Posterior vena cava (tissue), 2 donors: ENCODE measurements at regions of chr1 and their contacts with region 1.

Region 1: DNA sequence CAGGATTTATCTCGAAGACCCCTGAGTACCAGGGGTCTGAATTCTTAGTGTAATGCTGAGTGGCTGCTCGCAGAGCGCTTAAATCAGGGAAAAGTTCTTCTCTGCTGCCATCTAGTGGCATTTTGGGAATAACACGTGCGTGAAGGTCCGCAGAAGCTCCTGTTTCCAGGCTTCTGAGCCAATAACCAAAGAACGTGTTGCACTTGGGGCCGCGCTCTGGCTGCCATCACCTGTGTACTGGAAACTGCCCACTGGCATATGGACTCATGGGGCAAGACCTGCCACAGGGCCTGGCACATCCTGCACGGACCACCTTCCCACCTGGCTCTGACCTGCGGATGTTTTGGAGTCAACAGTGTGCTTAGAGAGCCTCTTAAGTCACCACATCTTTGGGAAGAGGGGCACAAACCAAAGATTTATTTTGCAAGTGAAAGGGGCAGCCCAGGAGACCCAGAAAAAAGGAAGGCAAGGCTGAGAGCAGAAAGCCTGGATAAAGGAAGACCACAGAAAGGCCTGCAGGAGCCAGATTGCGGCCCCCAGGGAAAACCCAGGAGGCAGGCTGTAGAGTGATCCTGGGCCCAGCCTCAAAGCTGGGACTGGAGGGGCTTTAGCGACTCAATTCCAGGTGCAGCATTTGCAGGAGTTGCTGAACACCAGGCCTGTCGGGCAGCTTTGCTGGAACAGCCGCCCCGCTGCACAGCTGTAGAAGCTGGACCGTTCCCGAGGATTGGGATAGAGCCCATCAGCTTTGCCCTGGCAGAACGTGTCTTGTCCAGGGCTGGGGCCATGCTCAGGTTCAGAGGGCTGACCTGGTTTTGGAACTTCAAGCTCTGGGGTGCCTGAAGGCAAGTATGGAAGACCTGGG is 13.0 kb downstream of the CHIT1 start:
- DNase-seq: no peak

Region 2: DNA sequence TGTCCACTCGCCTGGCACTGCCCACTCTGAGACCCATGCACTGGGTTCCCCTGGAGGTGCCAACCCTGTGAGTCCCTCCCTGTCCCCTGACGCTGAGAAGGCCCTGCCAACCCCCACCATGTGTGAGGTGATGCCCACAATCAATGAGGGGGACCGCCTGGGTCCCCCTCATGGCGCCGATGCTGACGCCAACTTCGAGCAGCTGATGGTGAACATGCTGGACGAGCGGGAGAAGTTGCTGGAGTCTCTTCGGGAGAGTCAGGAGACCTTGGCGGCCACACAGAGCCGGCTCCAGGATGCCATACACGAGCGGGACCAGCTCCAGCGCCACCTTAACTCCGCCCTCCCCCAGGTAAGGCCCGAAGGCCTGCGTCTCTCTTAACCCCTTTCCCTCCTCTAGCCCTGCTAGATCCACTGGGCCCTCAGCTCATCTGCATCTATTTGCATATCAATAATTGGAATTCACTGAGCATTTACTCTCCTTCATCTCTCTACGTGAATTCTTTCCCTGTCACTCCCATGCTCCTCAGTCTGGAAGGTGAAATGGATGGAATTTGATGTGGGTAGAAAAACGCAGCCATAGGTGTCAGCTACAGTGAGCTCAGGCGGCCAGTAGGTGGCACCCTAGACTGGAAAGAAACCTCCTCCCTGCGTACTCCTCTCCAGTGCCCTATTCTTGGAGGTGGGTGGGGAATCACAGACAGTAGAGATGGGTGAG is 177.5 kb before region 1 on chr1:
- intact Hi-C with region 1: loop called (anchors 5 kb)
- DNase-seq: peak; percentile 89

Region 3: DNA sequence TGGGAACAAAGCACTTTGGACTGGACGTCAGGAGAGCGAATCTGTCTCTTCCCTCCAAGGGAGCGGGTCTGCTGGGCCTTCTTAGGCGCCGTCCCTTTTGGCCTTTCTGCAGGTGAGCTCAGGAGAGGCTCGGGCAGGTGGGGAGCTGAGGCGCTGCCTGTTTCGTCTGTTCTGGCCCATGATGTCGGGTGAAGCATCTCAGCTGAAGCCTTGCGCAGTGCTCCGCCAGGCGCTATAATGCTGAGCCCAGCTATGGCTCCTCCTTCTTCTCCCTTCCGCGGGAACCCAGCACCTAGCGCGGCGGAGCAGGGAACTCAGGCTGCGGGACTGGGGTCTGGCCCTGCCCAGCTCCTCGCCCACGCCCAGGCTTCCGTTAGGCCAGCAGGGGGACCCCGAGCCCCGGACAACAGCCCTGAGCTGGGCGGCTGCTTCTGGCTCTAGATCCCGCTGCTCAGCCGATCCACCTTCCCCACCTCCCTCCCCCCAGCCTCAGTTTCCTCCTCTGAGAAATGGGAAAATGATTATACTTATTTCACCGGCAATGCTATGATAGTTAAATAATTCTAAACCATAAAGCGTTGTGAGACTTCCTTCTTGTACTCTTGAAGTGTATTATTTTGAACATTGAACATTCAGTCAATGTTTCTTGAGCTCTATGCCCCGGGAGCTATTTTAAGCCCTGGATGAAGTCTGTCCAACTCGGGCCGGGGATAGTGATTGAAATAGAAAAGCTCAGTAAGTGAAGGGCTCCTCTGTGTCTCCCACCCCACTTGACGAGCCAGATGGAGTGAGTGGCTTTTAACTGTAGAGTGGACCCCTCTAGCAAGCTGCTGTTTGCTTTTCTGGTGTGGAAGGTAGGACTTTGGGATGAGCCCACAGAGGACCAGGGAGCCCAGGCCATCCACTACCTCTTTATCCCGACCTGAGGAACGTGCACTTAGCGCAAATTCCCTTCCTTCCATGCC is 98.6 kb before region 1 on chr1:
- intact Hi-C with region 1: loop called (anchors 5 kb)
- DNase-seq: peak; percentile 93

Region 4: DNA sequence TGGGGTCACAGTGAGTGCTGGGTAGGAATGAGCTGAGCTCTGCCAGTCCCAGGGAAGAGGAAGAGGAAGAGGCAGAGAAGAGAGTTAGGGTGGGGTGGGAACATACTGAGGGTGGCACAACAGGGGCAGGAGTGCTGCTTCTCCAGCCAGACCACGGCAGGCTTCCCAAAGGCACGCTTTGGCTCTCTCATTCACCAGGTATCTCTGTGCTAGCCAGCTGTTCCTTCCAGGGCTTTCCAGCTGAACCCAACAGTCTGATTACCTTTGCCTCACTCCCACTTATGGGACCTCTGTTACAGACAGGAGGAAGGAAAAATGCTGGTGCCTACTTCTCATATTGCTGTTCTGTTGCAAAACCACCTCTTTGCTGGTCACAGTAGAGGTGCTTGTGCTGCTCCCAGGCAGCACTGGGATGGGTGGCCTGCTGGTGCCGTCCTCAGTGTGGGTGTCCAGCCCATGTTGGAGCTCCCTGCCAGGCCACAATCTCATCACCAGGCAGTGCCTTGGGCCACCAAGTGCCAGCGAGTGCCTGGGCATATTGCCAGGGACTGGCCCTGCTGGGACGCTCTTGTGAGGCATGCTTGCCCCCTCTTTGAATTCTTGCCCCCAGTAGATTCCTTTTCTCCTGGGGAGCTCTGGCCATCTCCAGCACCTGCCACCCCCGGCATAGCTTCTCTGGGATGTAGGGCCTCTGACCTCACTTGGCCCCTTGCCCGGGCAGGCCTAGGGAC is 86.8 kb before region 1 on chr1:
- intact Hi-C with region 1: no loop called
- DNase-seq: peak; percentile 37